ENCODE measurements at regions of chr4 and their contacts with region 1.

Region 1: DNA sequence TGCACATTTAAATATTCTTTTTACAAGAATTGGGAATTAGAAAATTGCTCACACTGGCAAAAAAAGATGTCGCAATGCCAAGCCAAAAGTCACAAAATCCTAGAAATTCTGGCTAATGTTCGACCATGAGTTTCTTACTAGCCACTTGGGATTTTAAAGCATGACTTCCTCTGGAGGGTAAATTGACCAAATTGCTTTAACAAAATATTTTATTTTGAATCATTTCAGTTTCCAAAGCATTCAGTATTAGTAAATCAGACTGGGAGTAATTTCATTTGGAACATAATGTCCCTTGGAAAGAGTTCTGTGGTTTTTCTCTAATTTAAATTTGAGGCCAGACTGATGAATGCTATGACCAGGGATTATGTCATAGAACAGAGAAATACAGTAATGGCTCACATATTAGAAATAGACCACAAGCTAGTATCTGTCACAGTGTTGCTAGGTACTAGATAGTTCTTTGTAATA is 7.6 kb upstream of the CXCL5 start:
- DNase-seq: no peak

Region 2: DNA sequence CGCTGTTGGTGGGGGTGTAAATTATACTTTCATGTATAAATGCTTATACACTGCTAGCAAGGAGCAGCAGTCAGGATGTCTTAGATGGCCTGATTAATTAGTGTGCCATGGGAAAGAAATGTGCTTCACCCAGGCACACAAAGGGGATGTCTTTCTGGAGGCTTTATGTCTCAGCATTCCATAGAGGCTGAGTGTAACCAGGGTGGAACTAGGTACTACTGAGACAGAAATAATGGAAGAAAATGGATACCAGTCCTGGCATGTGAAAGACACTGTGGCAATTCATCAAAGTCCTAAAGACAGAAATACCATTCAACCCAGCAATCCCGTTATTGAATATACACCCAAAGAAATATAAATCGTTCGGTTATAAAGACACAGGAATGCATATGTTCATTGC is 76.8 kb before region 1 on chr4:
- intact Hi-C with region 1: no loop called
- DNase-seq: no peak

Region 3: DNA sequence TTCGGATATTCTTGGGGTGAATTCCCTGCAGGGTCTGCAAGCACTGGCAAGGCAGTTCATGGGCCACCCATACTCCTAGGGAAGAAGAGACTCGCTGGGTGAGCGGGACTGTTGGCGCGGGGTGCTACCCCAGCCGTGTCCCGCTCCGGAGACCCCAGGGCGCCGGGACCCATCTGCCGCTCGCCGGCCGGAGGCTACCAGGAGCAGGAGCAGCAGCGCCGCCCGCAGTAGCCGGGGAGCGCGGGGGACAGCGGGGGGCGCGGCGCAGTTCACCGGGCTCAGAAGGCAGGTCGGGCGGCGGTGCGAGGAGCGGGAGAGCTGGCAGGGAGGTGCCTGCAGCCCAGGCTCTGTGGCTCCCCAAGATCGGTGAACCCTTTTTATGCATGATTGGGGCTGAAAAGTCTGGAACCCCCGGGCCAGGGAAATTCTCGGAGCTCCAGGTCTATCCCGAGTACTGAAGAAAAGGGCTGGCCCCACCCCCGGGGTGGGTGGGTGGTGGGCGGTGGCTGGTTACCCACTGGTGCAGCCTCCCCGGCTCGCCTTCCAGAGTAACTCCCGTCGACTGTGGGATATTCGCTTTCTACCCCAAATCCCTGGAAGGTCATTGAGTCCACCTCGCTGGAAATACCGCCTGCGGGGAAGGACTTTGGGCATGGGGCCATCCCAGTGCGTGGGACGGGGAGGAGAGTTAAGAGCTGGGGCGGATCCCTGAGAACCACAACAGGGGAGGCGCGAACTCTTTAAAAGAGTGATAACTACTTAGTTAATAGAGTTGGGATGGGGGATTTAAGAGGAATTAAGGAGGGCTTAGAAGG is 61.8 kb before region 1 on chr4:
- intact Hi-C with region 1: no loop called
- DNase-seq: peak; percentile 80

Region 4: GRCh38 chr4:74056858-74057562 is 51.0 kb after region 1 on chr4:
- intact Hi-C with region 1: loop called in 1 of 2 experiments (anchors 10 kb)
- DNase-seq: no peak